Mammary epithelial cell (primary cell): ENCODE measurements at regions of chr5 and their contacts with region 1.

Region 1: DNA sequence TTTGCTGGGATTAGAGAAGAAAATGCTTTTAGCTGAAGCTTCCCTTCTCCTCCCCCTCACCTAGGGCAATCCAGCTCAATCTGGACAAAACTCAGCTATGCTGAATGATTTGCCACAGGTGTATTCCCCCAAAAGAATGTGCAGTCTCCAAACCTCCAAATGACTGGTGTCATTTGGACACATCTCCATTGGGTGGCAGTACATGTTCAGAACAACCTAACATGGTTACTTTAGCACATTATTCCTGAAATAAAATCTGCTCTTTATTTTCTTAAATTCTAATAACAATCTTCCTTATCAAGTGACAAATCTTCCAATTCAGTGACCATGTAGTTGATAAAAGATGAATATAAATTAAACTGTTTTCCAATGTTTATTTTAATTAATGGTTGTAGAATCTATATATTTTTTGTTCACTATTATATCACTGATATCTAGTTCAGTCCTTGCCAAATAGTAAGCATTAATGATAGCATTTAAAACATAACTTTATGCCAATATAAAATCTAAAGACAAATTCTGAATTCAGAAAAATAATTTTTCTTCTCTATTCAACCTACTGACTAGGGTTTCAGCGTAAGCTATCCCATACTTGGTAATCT is 61.3 kb upstream of the MOCS2 start:
- DNase-seq: peak; percentile 52
- H3K4me3 ChIP-seq: no peak overlapping the region
- H3K27ac ChIP-seq: peak overlapping the region; percentile 51
- H3K4me1 ChIP-seq: no peaks in the 10 kb centered on the region
- H3K27me3 ChIP-seq: no peaks in the 10 kb centered on the region
- CTCF ChIP-seq: peak; percentile 77 to 78

Region 2: GRCh38 chr5:52878656-52879055 is 292.2 kb before region 1 on chr5:
- CTCF ChIA-PET with region 1: no interaction called
- dilution Hi-C with region 1: no loop called
- in situ Hi-C with region 1: no loop called
- intact Hi-C with region 1: no loop called
- DNase-seq: peak; percentile 19
- H3K4me3 ChIP-seq: no peak overlapping the region
- H3K27ac ChIP-seq: no peak overlapping the region
- H3K4me1 ChIP-seq: no peaks in the 10 kb centered on the region
- H3K27me3 ChIP-seq: no peaks in the 10 kb centered on the region
- CTCF ChIP-seq: no peak

Region 3: GRCh38 chr5:53095931-53096525 is 74.8 kb before region 1 on chr5:
- CTCF ChIA-PET with region 1: no interaction called
- dilution Hi-C with region 1: no loop called
- in situ Hi-C with region 1: no loop called
- intact Hi-C with region 1: no loop called
- DNase-seq: peak; percentile 37
- H3K4me3 ChIP-seq: no peak overlapping the region
- H3K27ac ChIP-seq: no peak overlapping the region
- H3K4me1 ChIP-seq: no peaks in the 10 kb centered on the region
- H3K27me3 ChIP-seq: no peaks in the 10 kb centered on the region
- CTCF ChIP-seq: peak; percentile 77 to 80

Region 4: DNA sequence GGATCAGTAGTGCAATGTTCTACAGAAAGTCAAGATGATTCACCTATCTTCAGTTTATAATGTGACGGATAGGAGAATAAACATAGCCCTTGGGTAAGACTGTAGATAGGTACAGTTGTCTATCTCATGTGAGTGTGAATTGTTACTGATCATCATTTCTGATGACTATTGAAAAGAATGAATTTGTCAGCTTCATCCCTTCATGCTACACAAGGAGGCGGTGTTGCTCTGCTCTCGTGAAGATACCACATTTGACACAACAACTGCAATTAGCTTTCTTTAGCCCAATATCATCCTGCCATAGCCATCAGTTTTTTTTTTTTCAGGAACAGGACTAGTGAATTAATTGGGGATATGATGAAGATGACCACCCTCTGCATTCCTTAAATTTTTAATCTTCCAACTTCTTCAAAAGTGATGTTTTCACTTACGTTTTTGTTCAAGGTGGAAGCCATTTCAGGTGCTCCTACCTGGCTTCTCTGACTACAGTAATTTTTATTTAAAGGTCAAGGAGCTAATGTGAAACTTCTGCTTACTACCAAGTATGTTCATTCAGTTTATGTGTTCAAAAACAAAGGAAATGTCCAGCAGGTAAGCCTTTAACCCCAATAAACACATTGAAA is 91.6 kb after region 1 on chr5:
- CTCF ChIA-PET with region 1: no interaction called
- dilution Hi-C with region 1: no loop called
- in situ Hi-C with region 1: no loop called
- intact Hi-C with region 1: loop called (anchors 1 kb)
- DNase-seq: peak; percentile 60
- H3K4me3 ChIP-seq: no peak overlapping the region
- H3K27ac ChIP-seq: peak overlapping the region; percentile 48
- H3K4me1 ChIP-seq: peaks cover 44% of the 10 kb centered on the region
- H3K27me3 ChIP-seq: no peaks in the 10 kb centered on the region
- CTCF ChIP-seq: peak; percentile 63 to 68

Region 5: GRCh38 chr5:53291047-53291927 is 120.4 kb after region 1 on chr5:
- CTCF ChIA-PET with region 1: no interaction called
- dilution Hi-C with region 1: no loop called
- in situ Hi-C with region 1: no loop called
- intact Hi-C with region 1: loop called (anchors 2 kb)
- DNase-seq: peak; percentile 60
- H3K4me3 ChIP-seq: no peak overlapping the region
- H3K27ac ChIP-seq: peak overlapping the region; percentile 39
- H3K4me1 ChIP-seq: peaks cover 31% of the 10 kb centered on the region
- H3K27me3 ChIP-seq: no peaks in the 10 kb centered on the region
- CTCF ChIP-seq: no peak

Region 6: GRCh38 chr5:53902296-53902907 is 731.6 kb after region 1 on chr5:
- CTCF ChIA-PET with region 1: no interaction called
- dilution Hi-C with region 1: no loop called
- in situ Hi-C with region 1: no loop called
- intact Hi-C with region 1: no loop called
- DNase-seq: no peak
- H3K4me3 ChIP-seq: no peak overlapping the region
- H3K27ac ChIP-seq: no peak overlapping the region
- H3K4me1 ChIP-seq: no peaks in the 10 kb centered on the region
- H3K27me3 ChIP-seq: no peaks in the 10 kb centered on the region
- CTCF ChIP-seq: no peak

Region 7: DNA sequence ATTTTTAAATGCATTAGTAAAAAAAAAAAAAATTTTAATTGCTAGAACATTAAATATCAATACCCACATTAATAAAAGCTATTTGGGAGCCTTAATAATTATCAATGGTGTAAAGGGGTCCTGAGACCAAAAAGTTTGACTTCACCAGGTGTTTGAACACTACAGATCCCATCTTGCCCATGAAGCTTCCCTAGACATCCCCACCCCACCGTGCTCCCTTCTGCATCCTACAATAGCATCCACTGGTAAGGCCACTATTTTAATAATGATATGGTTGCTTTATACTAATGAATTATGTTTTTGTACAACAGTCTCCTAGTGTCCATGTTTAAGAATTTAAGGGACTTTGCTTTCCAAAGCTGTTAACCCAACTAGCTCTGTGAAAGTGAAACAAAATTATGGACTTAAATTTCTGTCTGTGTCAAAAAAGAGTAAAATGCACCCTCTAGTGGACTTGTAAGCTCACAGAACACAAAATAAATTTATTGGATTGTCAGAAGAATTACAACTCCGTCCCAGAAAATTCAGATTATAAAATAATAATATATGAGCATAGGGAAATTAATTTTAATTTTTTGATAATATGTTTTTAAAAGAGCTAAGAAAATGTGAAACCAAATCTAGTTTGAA is 1063.6 kb after region 1 on chr5:
- CTCF ChIA-PET with region 1: no interaction called
- dilution Hi-C with region 1: no loop called
- in situ Hi-C with region 1: no loop called
- intact Hi-C with region 1: loop called (anchors 5 kb)
- DNase-seq: peak; percentile 8
- H3K4me3 ChIP-seq: no peak overlapping the region
- H3K27ac ChIP-seq: no peak overlapping the region
- H3K4me1 ChIP-seq: no peaks in the 10 kb centered on the region
- H3K27me3 ChIP-seq: no peaks in the 10 kb centered on the region
- CTCF ChIP-seq: peak; percentile 34 to 53